ENCODE measurements at regions of chr16 and their contacts with region 1.

Region 1: DNA sequence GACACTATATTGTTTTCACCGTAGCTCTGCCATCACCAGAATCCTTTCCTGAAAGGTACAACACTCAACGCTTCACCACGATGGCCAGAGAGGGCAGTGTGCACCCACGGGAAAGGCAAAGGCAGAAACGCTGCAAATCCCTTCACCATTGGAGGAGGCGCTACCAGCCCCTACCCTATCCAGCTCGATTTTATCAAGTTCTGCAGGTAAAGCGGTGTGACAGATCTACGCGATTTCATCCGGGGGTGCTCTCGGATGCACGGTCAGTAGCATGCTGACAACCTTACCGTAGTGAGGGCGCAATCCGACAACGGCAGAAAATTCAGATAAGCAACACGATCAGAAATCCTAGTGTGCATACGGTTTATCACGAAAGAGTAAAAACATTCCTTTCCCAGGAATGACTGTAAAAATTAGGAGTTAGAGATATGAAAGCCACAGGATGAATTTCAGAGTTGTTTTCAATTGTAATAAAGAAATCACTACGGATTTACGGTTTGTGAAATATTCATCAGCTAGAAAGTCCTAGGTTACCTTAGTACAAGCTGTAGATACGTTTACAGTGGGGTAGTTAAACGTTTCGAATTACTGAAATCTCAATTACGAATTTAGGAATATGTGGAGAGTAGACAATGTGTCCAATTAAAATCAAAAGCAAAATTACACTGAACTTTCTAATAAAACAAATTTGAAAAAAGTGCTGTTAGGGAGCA is 1.8 kb downstream of the NETO2 start:
- DNase-seq: peak; percentile 92
- H3K4me3 ChIP-seq: peak overlapping the region; percentile 51
- H3K27ac ChIP-seq: no peak overlapping the region
- H3K4me1 ChIP-seq: no peaks in the 10 kb centered on the region
- H3K27me3 ChIP-seq: no peaks in the 10 kb centered on the region
- CTCF ChIP-seq: peak; percentile 91

Region 2: GRCh38 chr16:46976550-46976949 is 165.4 kb before region 1 on chr16:
- intact Hi-C with region 1: no loop called
- DNase-seq: peak; percentile 23
- H3K4me3 ChIP-seq: no peak overlapping the region
- H3K27ac ChIP-seq: no peak overlapping the region
- H3K4me1 ChIP-seq: no peaks in the 10 kb centered on the region
- H3K27me3 ChIP-seq: no peaks in the 10 kb centered on the region
- CTCF ChIP-seq: no peak

Region 3: DNA sequence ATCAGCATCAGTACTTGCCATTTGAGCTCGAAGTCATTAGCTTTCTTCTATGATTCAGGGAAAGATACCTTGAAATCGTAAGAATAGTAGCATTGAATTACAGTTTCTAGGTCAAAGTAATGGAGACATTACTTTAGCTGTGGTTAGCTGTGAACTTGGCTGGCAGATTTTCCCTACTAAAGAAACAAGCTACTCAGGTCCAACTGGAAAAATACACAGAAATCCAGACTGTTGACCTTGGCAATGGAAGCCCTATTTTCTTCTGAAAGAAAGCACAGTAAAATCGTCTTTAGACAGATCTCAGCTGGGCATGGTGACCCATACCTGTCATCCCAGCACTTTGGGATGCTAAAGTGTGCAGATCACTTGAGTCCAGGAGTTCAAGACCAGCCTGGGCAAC is 155.0 kb before region 1 on chr16:
- intact Hi-C with region 1: no loop called
- DNase-seq: no peak
- H3K4me3 ChIP-seq: no peak overlapping the region
- H3K27ac ChIP-seq: no peak overlapping the region
- H3K4me1 ChIP-seq: no peaks in the 10 kb centered on the region
- H3K27me3 ChIP-seq: no peaks in the 10 kb centered on the region
- CTCF ChIP-seq: no peak

Region 4: GRCh38 chr16:47037746-47038458 is 104.0 kb before region 1 on chr16:
- intact Hi-C with region 1: loop called (anchors 10 kb)
- DNase-seq: peak; percentile 94
- H3K4me3 ChIP-seq: peak overlapping the region; percentile 66
- H3K27ac ChIP-seq: no peak overlapping the region
- H3K4me1 ChIP-seq: peaks cover 4% of the 10 kb centered on the region
- H3K27me3 ChIP-seq: no peaks in the 10 kb centered on the region
- CTCF ChIP-seq: peak; percentile 91

Region 5: DNA sequence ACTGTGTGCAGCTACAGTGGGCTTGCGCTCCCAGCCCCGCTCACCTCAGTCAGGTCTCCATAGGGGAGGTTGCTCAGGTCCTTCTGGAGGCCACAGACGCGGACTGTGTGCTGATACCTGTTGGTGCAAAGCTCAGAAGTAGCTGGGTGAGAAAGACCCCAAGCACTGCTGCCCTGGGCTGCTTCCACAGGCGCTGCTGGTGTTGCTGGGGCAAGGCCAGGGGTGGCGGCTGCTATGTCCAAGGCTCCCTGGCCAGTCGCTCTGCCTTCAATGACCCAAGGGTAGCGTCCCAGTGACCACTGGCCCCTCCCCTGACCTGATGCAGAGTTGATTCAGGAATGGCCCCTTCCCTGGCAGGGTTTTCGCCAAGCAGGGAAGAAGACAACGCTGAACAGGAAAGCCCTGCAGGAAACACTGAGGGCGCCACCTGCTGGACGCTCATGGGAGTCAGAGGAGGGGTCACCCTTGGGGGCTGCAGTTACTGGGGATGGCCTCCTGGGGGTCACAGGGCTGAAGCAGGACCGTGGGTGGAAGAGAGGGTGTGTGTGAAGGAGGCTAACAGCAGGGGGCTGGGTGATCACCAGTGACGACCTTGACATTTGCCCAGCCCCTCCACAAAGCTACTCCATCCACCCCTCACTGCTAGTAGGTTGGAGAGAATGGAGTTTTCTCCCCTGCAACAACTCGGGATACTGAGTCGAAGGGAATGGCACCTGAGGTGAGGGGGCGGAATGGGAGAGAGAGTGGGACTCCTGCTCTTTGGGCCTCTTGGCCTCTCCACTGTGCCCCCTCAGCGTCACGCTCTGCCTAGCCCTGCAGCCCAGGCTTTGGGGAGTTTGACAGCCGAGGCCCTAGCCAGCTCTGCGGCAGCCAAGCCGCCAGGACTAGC is 975.5 kb after region 1 on chr16:
- intact Hi-C with region 1: loop called (anchors 10 kb)
- DNase-seq: peak; percentile 29
- H3K4me3 ChIP-seq: no peak overlapping the region
- H3K27ac ChIP-seq: no peak overlapping the region
- H3K4me1 ChIP-seq: no peaks in the 10 kb centered on the region
- H3K27me3 ChIP-seq: no peaks in the 10 kb centered on the region
- CTCF ChIP-seq: peak; percentile 38

Region 6: GRCh38 chr16:48156790-48157209 is 1014.9 kb after region 1 on chr16:
- intact Hi-C with region 1: loop called (anchors 5 kb)
- DNase-seq: peak; percentile 83
- H3K4me3 ChIP-seq: no peak overlapping the region
- H3K27ac ChIP-seq: no peak overlapping the region
- H3K4me1 ChIP-seq: no peaks in the 10 kb centered on the region
- H3K27me3 ChIP-seq: no peaks in the 10 kb centered on the region
- CTCF ChIP-seq: peak; percentile 96

Measured in colonic mucosa (tissue), 4 donors.